ENCODE measurements at regions of chr5 and their contacts with region 1.

Region 1: GRCh38 chr5:42994246-42995151 is 45.6 kb downstream of the ANXA2R start:
- DNase-seq: no peak
- ATAC-seq: peak; percentile 72
- H3K4me3 ChIP-seq: peak overlapping the region; percentile 82
- H3K27ac ChIP-seq: peak overlapping the region; percentile 94
- H3K4me1 ChIP-seq: peaks cover 12% of the 10 kb centered on the region
- H3K27me3 ChIP-seq: no peaks in the 10 kb centered on the region
- CTCF ChIP-seq: peak; percentile 89 to 94 (median 90)
- EP300 ChIP-seq: 0 out of 4 replicates have a peak, but pooled peaks of 1 of the 2 experiments have one; percentile 13
- POLR2A ChIP-seq: 0 out of 2 replicates have a peak, but pooled peaks have one; percentile 29
- RAD21 ChIP-seq: peak; percentile 75

Region 2: GRCh38 chr5:42950440-42951292 is 43.8 kb before region 1 on chr5:
- CTCF ChIA-PET with region 1: interaction called, 11 read pairs
- POLR2A ChIA-PET with region 1: interaction called, 9 read pairs
- RAD21 ChIA-PET with region 1: interaction called, 8 read pairs
- SMC1A ChIA-PET with region 1: interaction called, 8 read pairs
- in situ Hi-C with region 1: loop called (anchors 5 kb)
- intact Hi-C with region 1: loop called (anchors 1 kb)
- DNase-seq: peak; percentile 32
- ATAC-seq: peak; percentile 48
- H3K4me3 ChIP-seq: peak overlapping the region; percentile 62
- H3K27ac ChIP-seq: peak overlapping the region; percentile 51
- H3K4me1 ChIP-seq: peaks cover 13% of the 10 kb centered on the region
- H3K27me3 ChIP-seq: no peaks in the 10 kb centered on the region; a peak in 1 of 4 replicates
- CTCF ChIP-seq: no peak
- EP300 ChIP-seq: no peak
- POLR2A ChIP-seq: no peak; the same call in 1 of the 2 replicates
- RAD21 ChIP-seq: no peak

Region 3: DNA sequence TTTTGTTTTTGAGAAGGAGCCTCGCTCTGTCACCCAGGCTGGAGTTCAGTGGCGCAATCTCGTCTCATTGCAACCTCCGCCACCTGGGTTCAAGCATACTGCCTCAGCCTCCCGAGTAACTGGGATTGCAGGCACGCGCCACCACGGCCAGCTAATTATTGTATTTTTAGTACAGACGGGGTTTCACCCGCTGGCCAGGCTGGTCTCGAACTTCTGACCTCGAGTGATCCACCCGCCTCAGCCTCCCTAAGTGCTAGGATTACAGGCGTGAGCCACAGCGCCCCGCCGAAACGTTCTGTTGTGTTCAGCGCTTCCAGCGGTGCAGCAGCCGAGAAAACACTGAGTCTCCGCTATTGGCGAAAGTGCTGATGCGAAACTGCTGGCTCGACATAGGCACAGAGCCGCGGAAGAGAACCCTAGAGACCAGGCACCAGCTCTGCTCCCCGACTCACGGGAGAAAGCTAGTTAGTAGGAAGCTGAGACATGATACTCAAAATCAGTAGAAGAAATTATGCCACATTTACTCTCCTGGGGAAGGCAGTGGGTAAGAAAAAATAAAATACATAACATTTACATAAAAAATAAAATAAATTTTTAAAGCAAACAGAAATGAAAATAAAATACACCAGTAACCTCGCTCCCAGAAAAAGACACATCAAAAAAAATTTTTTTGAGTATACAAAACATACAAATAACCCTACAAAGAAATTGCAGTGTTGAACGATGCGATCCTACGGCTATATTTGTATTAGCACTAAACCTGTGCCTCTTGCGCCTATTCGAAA is 14.1 kb after region 1 on chr5:
- CTCF ChIA-PET with region 1: interaction called, 64 read pairs
- POLR2A ChIA-PET with region 1: interaction called, 62 read pairs
- RAD21 ChIA-PET with region 1: interaction called, 45 read pairs
- SMC1A ChIA-PET with region 1: interaction called, 47 read pairs
- in situ Hi-C with region 1: no loop called
- intact Hi-C with region 1: loop called (anchors 1 kb)
- DNase-seq: no peak
- ATAC-seq: peak; percentile 72
- H3K4me3 ChIP-seq: peak overlapping the region; percentile 67
- H3K27ac ChIP-seq: peak overlapping the region; percentile 94
- H3K4me1 ChIP-seq: peaks cover 13% of the 10 kb centered on the region
- H3K27me3 ChIP-seq: no peaks in the 10 kb centered on the region
- CTCF ChIP-seq: peak in 2 of 3 experiments; percentile 5 to 13; a peak in 2 of 6 replicates
- EP300 ChIP-seq: peak in 1 of 2 experiments; percentile 77; a peak in 2 of 4 replicates
- POLR2A ChIP-seq: no peak
- RAD21 ChIP-seq: no peak

Region 4: DNA sequence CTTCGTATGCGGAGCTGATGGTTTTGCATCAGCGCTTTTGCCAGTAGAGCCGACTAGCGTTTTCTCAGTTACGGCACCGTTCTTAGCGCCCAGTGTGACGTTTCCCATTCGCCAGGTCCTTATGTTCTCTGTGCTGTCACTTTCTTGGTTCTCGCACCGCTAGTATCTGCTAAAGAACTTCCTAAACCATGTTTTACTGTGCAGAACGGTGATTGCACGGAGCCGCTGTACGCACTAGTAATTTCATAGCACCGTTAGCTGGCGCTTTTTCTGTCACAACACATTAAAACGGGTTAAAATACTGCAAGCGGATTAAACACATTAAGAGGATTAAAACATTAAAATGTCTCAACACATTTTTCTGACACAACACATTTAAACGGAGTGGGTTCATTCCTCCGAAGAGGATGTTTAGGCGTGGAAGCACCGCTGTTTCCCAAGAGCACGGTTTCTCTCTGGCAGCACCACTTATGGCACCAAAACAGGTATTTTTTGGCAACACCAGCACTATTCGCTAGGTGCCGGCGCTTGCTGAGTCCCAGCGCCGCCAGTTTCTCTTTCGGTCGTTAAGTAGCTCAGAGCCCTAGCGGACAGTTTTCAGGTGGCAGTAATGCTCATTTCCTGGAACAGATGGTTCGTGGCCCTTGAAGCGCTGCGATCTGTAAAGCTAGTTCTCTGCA is 25.3 kb after region 1 on chr5:
- CTCF ChIA-PET with region 1: interaction called, 55 read pairs
- POLR2A ChIA-PET with region 1: interaction called, 30 read pairs
- RAD21 ChIA-PET with region 1: interaction called, 78 read pairs
- SMC1A ChIA-PET with region 1: interaction called, 21 read pairs
- in situ Hi-C with region 1: no loop called
- intact Hi-C with region 1: loop called (anchors 1 kb)
- DNase-seq: no peak
- ATAC-seq: peak; percentile 78
- H3K4me3 ChIP-seq: peak overlapping the region; percentile 83
- H3K27ac ChIP-seq: peak overlapping the region; percentile 94
- H3K4me1 ChIP-seq: peaks cover 16% of the 10 kb centered on the region
- H3K27me3 ChIP-seq: no peaks in the 10 kb centered on the region
- CTCF ChIP-seq: peak; percentile 42 to 73 (median 59)
- EP300 ChIP-seq: no peak
- POLR2A ChIP-seq: peak; percentile 57
- RAD21 ChIP-seq: peak; percentile 40; the same call in 1 of the 2 replicates

Region 5: DNA sequence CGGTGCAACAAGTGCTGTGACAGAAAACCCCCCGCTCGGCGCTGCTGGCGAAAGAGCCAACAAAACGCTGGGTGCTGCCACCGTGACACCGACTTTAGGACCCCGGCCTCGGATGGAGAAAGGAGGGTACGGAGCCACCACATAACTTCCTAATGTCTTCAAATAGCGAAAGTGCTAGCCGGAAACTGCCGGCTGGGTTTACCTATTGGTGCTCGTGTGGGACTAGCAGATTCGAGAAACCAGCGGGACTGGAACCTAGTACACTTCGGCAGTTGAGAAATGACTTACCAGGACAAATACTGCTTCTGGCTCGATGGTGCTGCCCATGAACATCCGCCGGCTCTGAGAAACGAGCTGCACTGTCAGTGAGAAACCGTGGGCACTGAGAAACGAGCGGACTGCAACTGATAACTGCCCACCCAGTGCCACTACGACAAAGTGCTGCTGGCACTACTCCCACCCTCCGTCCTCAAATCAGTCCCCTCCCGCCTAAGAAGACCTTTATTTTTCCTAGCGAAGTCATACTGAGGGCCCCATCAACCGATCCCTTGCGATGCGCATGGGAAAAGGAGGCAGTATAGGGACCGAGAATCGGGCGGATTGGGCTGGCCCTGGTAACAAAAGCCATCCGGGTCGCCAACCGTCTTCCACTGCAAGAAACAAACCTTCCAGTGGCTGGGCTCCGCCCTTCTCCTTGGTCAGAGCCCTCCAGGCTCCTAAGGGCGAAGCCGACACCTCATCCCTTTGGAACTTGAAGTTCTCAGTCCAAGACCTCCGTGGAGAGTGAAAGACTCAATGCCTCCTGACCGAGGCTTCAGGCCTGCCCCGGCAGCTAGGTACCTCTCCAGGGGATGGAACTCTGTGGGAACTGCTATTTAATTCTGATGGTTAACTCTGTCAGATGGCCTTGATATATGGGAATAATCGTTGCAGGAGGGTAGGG is 72.6 kb after region 1 on chr5:
- CTCF ChIA-PET with region 1: interaction called, 14 read pairs
- POLR2A ChIA-PET with region 1: interaction called, 9 read pairs
- RAD21 ChIA-PET with region 1: interaction called, 11 read pairs
- SMC1A ChIA-PET with region 1: interaction called, 3 read pairs
- in situ Hi-C with region 1: no loop called
- intact Hi-C with region 1: loop called (anchors 1 kb)
- DNase-seq: peak; percentile 74
- ATAC-seq: peak; percentile 58
- H3K4me3 ChIP-seq: peak overlapping the region; percentile 91
- H3K27ac ChIP-seq: peak overlapping the region; percentile 100
- H3K4me1 ChIP-seq: peaks cover 10% of the 10 kb centered on the region
- H3K27me3 ChIP-seq: no peaks in the 10 kb centered on the region
- CTCF ChIP-seq: no peak
- EP300 ChIP-seq: peak in 1 of 2 experiments; percentile 100; a peak in 2 of 4 replicates
- POLR2A ChIP-seq: peak; percentile 47; the same call in 1 of the 2 replicates
- RAD21 ChIP-seq: no peak

Region 6: GRCh38 chr5:43313035-43313853 is 318.7 kb after region 1 on chr5 and contains the start of gene HMGCS1:
- CTCF ChIA-PET with region 1: interaction called, 3 read pairs
- POLR2A ChIA-PET with region 1: interaction called, 4 read pairs
- RAD21 ChIA-PET with region 1: interaction called, 3 read pairs
- SMC1A ChIA-PET with region 1: no interaction called
- in situ Hi-C with region 1: no loop called
- intact Hi-C with region 1: loop called (anchors 5 kb)
- DNase-seq: peak; percentile 100
- ATAC-seq: peak; percentile 92
- H3K4me3 ChIP-seq: peak within 1 kb of the TSS; percentile 79
- H3K27ac ChIP-seq: peak within 1 kb of the TSS; percentile 84
- H3K4me1 ChIP-seq: peaks cover 6% of the 10 kb centered on the region
- H3K27me3 ChIP-seq: no peaks in the 10 kb centered on the region
- CTCF ChIP-seq: peak in 2 of 3 experiments; percentile 6 to 16; a peak in 1 of 6 replicates
- EP300 ChIP-seq: peak in 1 of 2 experiments; percentile 60; a peak in 1 of 4 replicates
- POLR2A ChIP-seq: peak; percentile 99
- RAD21 ChIP-seq: peak; percentile 23; the same call in 1 of the 2 replicates
- polyA plus RNA-seq, gene HMGCS1: 74.9 to 94.1 TPM

Region 7: GRCh38 chr5:43556857-43557542 is 562.5 kb after region 1 on chr5 and contains the start of gene PAIP1:
- CTCF ChIA-PET with region 1: no interaction called
- POLR2A ChIA-PET with region 1: no interaction called
- RAD21 ChIA-PET with region 1: no interaction called
- SMC1A ChIA-PET with region 1: no interaction called
- in situ Hi-C with region 1: no loop called
- intact Hi-C with region 1: loop called (anchors 10 kb)
- DNase-seq: peak; percentile 37
- ATAC-seq: peak; percentile 84
- H3K4me3 ChIP-seq: peak within 1 kb of the TSS; percentile 94
- H3K27ac ChIP-seq: peak within 1 kb of the TSS; percentile 87
- H3K4me1 ChIP-seq: peaks cover 13% of the 10 kb centered on the region
- H3K27me3 ChIP-seq: no peaks in the 10 kb centered on the region
- CTCF ChIP-seq: peak in 2 of 3 experiments; percentile 56 to 61; a peak in 5 of 6 replicates
- EP300 ChIP-seq: no peak
- POLR2A ChIP-seq: peak; percentile 86
- RAD21 ChIP-seq: no peak; the same call in 1 of the 2 replicates
- polyA plus RNA-seq, gene PAIP1: 37.4 to 52.7 TPM

Measured in GM12878 (cell line).